ENCODE measurements at regions of chr11 and their contacts with region 1.

Region 1: DNA sequence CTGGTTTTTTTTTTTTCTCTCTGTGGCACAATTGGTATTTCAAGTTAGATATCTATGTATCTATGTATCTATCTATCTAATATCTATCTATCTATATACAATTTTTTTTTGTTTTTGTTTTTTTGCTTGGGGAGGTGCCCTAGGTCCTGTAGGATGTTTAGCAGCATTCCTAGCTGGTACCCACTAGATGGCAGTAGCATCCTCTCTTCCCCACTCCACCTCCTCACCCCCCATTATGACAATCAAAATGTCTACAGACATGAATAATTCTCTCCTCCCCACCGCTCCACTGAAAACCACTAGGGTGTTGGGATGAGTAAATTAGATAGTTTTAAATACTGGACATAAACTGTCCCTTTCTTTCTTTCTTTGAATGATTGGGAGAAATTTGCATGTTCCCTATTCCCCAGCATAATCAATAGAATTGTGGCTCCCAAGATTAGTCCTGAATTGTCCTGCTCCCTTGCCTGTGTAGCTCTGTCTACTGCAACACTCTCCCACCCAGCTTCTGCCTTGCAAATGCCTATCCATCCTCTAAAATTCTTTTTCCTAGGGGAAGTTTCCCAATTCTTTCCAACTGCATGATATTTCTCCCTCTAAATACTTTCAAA is 1152.4 kb downstream of the LRRC4C start:
- DNase-seq: peak; percentile 65
- H3K4me3 Mint-ChIP-seq: no peak overlapping the region
- H3K27ac Mint-ChIP-seq: no peak overlapping the region
- H3K4me1 Mint-ChIP-seq: peaks cover 18% of the 10 kb centered on the region
- H3K27me3 Mint-ChIP-seq: no peaks in the 10 kb centered on the region
- CTCF ChIP-seq: peak; percentile 74

Region 2: DNA sequence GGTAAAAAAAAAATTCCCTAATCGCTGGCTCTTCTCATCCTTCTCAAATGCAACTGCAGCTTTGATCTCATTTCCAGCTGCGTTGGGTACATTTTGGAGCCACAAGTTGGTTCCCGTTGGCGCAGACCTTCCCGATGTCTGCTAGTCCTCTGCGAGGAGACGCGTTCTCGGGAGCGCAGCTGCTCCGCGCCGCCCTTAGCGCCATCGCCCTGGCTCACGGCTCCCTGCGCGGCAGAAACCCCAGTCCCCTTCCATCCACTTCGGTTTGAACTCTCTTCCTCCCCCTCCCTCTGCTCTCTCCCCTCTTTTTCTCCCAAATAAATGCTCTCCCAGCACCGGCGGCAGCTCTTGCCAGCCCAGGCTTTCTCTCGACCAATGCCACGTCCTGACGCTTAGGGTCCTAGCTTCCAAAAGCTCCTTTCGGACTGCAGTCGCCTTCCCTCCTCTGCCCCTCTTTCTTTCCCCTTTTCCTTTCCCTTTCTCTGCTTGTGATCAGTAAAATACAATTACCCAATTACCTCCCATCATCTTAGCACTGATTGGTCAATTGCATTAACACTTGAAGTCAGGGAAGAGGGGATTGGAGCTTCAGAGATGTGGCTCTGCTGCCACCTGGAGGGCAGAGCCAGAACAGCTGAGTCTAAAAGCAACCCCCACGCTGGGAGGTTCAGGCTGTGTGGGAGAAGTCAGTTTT is 13.2 kb before region 1 on chr11:
- CTCF ChIA-PET with region 1: interaction called, 14 read pairs
- POLR2A ChIA-PET with region 1: interaction called, 5 read pairs
- intact Hi-C with region 1: no loop called
- DNase-seq: peak; percentile 80
- H3K4me3 Mint-ChIP-seq: peak overlapping the region; percentile 78
- H3K27ac Mint-ChIP-seq: peak overlapping the region; percentile 0
- H3K4me1 Mint-ChIP-seq: peaks cover 9% of the 10 kb centered on the region
- H3K27me3 Mint-ChIP-seq: no peaks in the 10 kb centered on the region
- CTCF ChIP-seq: peak; percentile 83

Region 3: DNA sequence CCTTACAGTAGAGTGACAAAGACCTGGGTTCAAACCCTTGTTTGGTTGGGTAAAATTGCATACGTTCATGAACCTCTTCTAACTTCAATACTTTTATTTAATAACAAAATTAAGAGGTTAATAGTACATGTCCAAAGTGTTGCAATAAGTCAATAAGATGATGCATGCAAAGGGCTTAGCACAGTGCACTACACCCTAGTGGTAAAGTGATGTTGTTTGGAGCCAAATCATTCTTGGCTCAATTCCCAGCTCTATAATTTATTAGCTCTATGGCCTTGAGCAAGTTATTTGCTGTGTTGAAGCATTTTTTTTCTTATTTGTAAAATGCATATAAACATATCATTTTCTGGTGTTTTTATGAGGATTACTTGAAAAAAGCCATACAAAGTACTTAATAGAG is 207.1 kb after region 1 on chr11:
- CTCF ChIA-PET with region 1: interaction called, 3 read pairs
- POLR2A ChIA-PET with region 1: no interaction called
- intact Hi-C with region 1: loop called (anchors 5 kb)
- DNase-seq: peak; percentile 79
- H3K4me3 Mint-ChIP-seq: no peak overlapping the region
- H3K27ac Mint-ChIP-seq: no peak overlapping the region
- H3K4me1 Mint-ChIP-seq: peaks cover 13% of the 10 kb centered on the region
- H3K27me3 Mint-ChIP-seq: no peaks in the 10 kb centered on the region
- CTCF ChIP-seq: peak; percentile 22

Region 4: GRCh38 chr11:41175304-41175972 is 868.4 kb after region 1 on chr11:
- CTCF ChIA-PET with region 1: interaction called, 20 read pairs
- POLR2A ChIA-PET with region 1: interaction called, 3 read pairs
- intact Hi-C with region 1: loop called (anchors 1 kb)
- DNase-seq: peak; percentile 9
- H3K4me3 Mint-ChIP-seq: no peak overlapping the region
- H3K27ac Mint-ChIP-seq: no peak overlapping the region
- H3K4me1 Mint-ChIP-seq: peaks cover 5% of the 10 kb centered on the region
- H3K27me3 Mint-ChIP-seq: no peaks in the 10 kb centered on the region
- CTCF ChIP-seq: no peak

Region 5: GRCh38 chr11:41431784-41432183 is 1124.7 kb after region 1 on chr11:
- CTCF ChIA-PET with region 1: interaction called, 3 read pairs
- POLR2A ChIA-PET with region 1: no interaction called
- intact Hi-C with region 1: loop called (anchors 5 kb)
- DNase-seq: no peak
- H3K4me3 Mint-ChIP-seq: no peak overlapping the region
- H3K27ac Mint-ChIP-seq: no peak overlapping the region
- H3K4me1 Mint-ChIP-seq: peaks cover 6% of the 10 kb centered on the region
- H3K27me3 Mint-ChIP-seq: no peaks in the 10 kb centered on the region
- CTCF ChIP-seq: peak; percentile 43